ENCODE measurements at regions of chr1 and their contacts with region 1.

Region 1: DNA sequence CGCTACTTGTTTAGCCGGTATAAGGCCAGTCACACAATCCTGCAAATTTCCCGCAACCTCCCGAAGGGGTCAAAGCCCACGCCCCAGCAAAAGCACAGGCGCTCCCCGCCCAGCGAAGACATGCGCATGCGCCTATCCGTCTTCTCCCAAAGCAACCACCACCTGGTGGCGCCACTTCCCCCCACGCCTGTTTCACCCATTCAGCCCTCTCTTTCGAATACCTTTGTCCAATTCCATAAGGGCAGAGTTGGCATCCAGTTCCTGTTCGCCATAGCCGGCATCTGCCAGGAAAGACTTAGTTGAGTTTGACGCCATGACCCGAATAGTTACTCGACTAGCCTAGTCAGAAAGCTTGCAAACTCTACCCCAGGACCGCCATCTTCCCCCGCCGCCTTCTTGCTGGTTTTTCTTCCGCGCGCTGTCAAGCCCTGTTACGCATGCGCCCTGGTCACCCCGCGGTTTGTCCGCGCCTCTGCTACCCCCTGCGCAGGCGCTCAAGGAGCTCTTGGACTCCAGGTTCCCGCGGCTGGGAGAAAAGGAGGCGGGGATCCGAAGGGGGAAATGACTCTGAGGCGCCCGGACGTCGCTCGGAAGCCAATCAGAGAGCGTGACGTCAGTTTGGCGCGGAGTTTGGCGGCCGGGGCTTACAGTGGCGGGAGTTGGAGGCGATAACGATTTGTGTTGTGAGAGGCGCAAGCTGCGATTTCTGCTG is at the starts of genes DTL and INTS7:
- DNase-seq: peak; percentile 99
- H3K4me3 Mint-ChIP-seq: peak within 1 kb of the TSS; percentile 96
- H3K27ac Mint-ChIP-seq: peak within 1 kb of the TSS; percentile 98
- H3K4me1 Mint-ChIP-seq: peaks cover 53% of the 10 kb centered on the region
- H3K27me3 Mint-ChIP-seq: peaks cover 6% of the 10 kb centered on the region
- total RNA-seq, gene DTL: 106 to 121 TPM
- total RNA-seq, gene INTS7: 24.7 to 25.9 TPM

Region 2: GRCh38 chr1:211680752-211681327 is 354.4 kb before region 1 on chr1:
- CTCF ChIA-PET with region 1: interaction called, 21 read pairs
- intact Hi-C with region 1: loop called (anchors 1 kb)
- DNase-seq: peak; percentile 80
- H3K4me3 Mint-ChIP-seq: no peak overlapping the region
- H3K27ac Mint-ChIP-seq: peak overlapping the region; percentile 24
- H3K4me1 Mint-ChIP-seq: peaks cover 7% of the 10 kb centered on the region
- H3K27me3 Mint-ChIP-seq: no peaks in the 10 kb centered on the region

Region 3: GRCh38 chr1:212012034-212012740 is 23.1 kb before region 1 on chr1:
- CTCF ChIA-PET with region 1: interaction called, 32 read pairs
- intact Hi-C with region 1: loop called (anchors 1 kb)
- DNase-seq: peak; percentile 84
- H3K4me3 Mint-ChIP-seq: no peak overlapping the region
- H3K27ac Mint-ChIP-seq: no peak overlapping the region
- H3K4me1 Mint-ChIP-seq: no peaks in the 10 kb centered on the region
- H3K27me3 Mint-ChIP-seq: no peaks in the 10 kb centered on the region

Region 4: DNA sequence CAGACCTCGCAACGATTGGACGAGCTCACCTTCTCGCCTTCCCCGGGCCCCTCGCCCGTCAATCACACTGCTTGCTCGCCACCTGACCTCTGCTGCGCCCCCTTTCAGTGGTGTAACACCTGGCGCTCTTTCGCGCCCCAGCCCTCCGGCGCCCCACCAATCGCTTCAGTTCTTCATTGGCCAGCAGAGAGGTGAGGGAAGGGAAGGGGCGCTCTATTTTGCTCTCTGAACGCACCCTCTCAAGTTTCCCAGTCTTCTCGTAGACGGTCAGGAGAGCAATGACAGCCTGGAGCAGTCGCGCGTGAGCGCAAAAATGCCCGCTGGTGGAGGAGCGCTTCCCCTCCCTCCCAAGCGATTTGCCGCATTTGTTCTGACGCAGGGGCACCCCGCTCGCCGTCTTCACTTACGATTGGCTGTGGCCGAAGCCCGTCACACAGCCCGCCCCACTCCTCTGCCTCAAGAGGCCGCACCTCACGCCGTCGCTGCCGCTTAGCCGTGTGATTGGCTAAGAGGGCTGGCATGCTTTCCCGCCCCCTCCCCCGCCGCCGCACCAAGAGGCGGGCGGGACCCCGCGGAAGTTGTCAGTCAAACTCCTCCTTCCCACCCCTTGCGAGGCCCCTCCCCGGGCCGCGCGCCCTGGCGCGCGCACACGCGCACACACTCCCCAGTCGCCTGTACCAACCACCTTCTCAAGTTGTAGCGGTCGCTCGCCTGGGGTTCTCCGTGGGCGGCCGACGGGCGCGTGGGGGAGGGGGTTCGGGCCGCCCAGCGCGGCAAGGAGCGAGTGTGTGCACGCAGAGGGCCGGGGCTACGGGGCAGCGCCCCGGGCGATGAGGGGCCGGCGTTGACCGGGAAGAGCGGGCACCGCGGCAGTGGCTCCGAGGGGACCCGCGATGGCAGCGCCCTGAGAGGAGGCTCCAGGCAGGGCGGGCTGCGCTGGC is 249.7 kb after region 1 on chr1 and contains the start of gene PPP2R5A:
- CTCF ChIA-PET with region 1: interaction called, 6 read pairs
- intact Hi-C with region 1: loop called (anchors 1 kb)
- DNase-seq: peak; percentile 99
- H3K4me3 Mint-ChIP-seq: peak within 1 kb of the TSS; percentile 96
- H3K27ac Mint-ChIP-seq: peak within 1 kb of the TSS; percentile 91
- H3K4me1 Mint-ChIP-seq: peaks cover 32% of the 10 kb centered on the region
- H3K27me3 Mint-ChIP-seq: no peaks in the 10 kb centered on the region
- total RNA-seq, gene PPP2R5A: 30.6 to 31.4 TPM

Region 5: GRCh38 chr1:212455803-212456528 is 420.7 kb after region 1 on chr1:
- CTCF ChIA-PET with region 1: interaction called, 18 read pairs
- intact Hi-C with region 1: loop called (anchors 1 kb)
- DNase-seq: peak; percentile 89
- H3K4me3 Mint-ChIP-seq: no peak overlapping the region
- H3K27ac Mint-ChIP-seq: no peak overlapping the region
- H3K4me1 Mint-ChIP-seq: peaks cover 3% of the 10 kb centered on the region
- H3K27me3 Mint-ChIP-seq: no peaks in the 10 kb centered on the region

Region 6: DNA sequence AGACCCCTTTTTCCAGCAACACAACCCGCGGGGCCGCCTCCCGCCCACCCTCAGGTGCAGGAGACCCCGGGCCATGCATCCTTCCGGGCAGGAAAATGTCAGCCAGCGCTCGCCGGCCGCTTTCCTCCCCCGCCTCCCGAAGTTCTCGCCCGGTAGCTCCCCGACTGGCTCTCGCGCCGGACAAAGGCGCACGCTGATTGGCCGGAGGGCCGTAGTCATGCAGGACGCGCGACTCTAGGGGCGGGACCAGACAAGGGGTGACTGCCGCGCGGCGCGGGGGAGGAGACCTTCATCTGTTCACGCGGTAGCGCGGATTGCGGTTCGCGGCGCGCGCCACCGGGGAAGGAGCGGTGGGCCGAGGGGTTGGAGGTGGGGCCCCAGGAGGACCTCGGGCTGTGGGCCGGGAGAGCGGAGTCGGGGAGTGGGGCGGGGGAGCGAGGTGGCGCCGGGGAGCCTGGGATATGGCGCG is 822.7 kb after region 1 on chr1 and contains the start of gene FLVCR1:
- CTCF ChIA-PET with region 1: interaction called, 3 read pairs
- intact Hi-C with region 1: loop called (anchors 1 kb)
- DNase-seq: peak; percentile 98
- H3K4me3 Mint-ChIP-seq: peak within 1 kb of the TSS; percentile 97
- H3K27ac Mint-ChIP-seq: peak within 1 kb of the TSS; percentile 88
- H3K4me1 Mint-ChIP-seq: peaks cover 11% of the 10 kb centered on the region
- H3K27me3 Mint-ChIP-seq: no peaks in the 10 kb centered on the region
- total RNA-seq, gene FLVCR1: 6.0 to 7.3 TPM

Measured in activated naive CD4-positive, alpha-beta T cell treated with anti-CD3 and anti-CD28 coated beads for 36 hours (primary cell).